Endothelial cell of umbilical vein (primary cell): ENCODE measurements at regions of chr2 and their contacts with region 1.

Region 1: GRCh38 chr2:98835831-98836385 is 100.1 kb downstream of the CRACDL start:
- DNase-seq: no peak
- H3K4me3 ChIP-seq: no peak overlapping the region
- H3K27ac ChIP-seq: no peak overlapping the region
- H3K4me1 ChIP-seq: peaks cover 23% of the 10 kb centered on the region
- H3K27me3 ChIP-seq: no peaks in the 10 kb centered on the region
- CTCF ChIP-seq: no peak
- POLR2A ChIP-seq: no peak

Region 2: DNA sequence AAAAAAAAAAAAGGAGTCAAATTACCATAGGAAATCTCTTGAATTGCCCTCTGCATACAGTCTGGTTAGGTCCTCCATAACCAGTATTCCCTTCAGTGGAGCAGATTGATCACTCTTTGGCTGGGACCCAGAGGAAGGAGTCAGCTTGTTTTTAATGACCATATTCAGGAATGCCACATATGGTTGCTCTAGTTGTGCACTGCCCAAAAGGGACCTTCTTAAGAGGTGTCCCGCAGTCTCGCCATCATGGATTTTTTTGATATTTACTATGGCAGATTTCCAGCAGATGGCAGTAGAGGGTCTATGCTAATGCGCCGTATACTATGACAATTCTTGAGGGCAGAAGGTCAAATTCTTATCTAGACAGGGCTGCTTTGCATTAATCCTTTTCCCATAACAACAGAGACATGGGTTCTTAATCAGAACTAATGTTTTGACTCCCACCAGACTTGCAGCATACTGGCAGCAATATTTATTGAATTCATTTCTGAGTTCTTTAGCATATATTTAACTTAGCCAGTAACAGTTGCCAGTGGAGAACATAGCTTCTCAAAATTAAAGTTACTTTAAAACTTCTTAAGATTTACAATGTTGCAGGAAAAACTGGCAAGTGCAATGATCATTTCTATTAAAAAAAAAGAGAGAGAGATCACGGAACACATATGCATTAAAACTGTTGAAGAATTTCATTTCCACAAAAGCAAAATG is 423.0 kb before region 1 on chr2:
- CTCF ChIA-PET with region 1: interaction called, 4 read pairs
- POLR2A ChIA-PET with region 1: no interaction called
- dilution Hi-C with region 1: no loop called
- intact Hi-C with region 1: loop called (anchors 1 kb)
- DNase-seq: peak; percentile 87
- H3K4me3 ChIP-seq: no peak overlapping the region
- H3K27ac ChIP-seq: no peak overlapping the region
- H3K4me1 ChIP-seq: peaks cover 3% of the 10 kb centered on the region
- H3K27me3 ChIP-seq: no peaks in the 10 kb centered on the region
- CTCF ChIP-seq: peak; percentile 58 to 61
- POLR2A ChIP-seq: no peak

Region 3: GRCh38 chr2:98649135-98649991 is 186.5 kb before region 1 on chr2:
- CTCF ChIA-PET with region 1: interaction called, 136 read pairs
- POLR2A ChIA-PET with region 1: no interaction called
- dilution Hi-C with region 1: no loop called
- intact Hi-C with region 1: loop called (anchors 1 kb)
- DNase-seq: peak; percentile 87
- H3K4me3 ChIP-seq: no peak overlapping the region
- H3K27ac ChIP-seq: peak overlapping the region; percentile 54
- H3K4me1 ChIP-seq: peaks cover 4% of the 10 kb centered on the region
- H3K27me3 ChIP-seq: no peaks in the 10 kb centered on the region
- CTCF ChIP-seq: peak; percentile 97
- POLR2A ChIP-seq: no peak

Region 4: GRCh38 chr2:98726205-98726604 is 109.7 kb before region 1 on chr2:
- CTCF ChIA-PET with region 1: interaction called, 21 read pairs
- POLR2A ChIA-PET with region 1: no interaction called
- dilution Hi-C with region 1: no loop called
- intact Hi-C with region 1: loop called (anchors 1 kb)
- DNase-seq: peak; percentile 77
- H3K4me3 ChIP-seq: peak overlapping the region; percentile 1 to 31 (median 4)
- H3K27ac ChIP-seq: peak overlapping the region; percentile 68
- H3K4me1 ChIP-seq: peaks cover 44% of the 10 kb centered on the region
- H3K27me3 ChIP-seq: no peaks in the 10 kb centered on the region
- CTCF ChIP-seq: no peak
- POLR2A ChIP-seq: no peak

Region 5: DNA sequence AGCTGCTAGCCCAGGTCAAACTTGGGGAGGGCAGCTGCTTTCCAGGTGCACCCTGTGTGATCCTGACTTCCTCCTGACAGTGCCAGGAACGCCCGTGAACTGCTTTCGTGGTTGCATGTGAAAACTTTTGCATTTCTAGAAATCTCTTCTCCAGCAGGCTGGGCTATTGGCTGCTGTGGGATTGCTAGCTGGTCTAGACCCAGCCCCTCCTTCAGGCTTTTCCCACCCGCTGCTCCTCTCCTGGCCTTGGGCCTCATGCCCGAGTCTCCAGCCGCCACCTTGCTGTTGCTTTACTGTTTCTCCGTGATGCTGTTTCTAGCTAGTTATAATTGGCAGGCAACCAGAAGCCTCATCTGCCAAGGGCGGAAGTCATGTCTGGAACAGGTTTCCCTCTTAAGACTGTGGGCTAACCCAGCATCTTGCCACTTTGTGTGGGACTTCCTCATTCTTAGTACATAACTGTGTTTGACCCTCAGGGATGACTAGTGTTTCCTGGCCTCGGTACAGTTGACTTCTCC is 77.9 kb before region 1 on chr2:
- CTCF ChIA-PET with region 1: interaction called, 7 read pairs
- POLR2A ChIA-PET with region 1: no interaction called
- dilution Hi-C with region 1: no loop called
- intact Hi-C with region 1: loop called (anchors 1 kb)
- DNase-seq: peak; percentile 98
- H3K4me3 ChIP-seq: no peak overlapping the region
- H3K27ac ChIP-seq: peak overlapping the region; percentile 66
- H3K4me1 ChIP-seq: peaks cover 20% of the 10 kb centered on the region
- H3K27me3 ChIP-seq: no peaks in the 10 kb centered on the region
- CTCF ChIP-seq: peak in 1 of 2 donors; percentile 3
- POLR2A ChIP-seq: peak; percentile 62

Region 6: DNA sequence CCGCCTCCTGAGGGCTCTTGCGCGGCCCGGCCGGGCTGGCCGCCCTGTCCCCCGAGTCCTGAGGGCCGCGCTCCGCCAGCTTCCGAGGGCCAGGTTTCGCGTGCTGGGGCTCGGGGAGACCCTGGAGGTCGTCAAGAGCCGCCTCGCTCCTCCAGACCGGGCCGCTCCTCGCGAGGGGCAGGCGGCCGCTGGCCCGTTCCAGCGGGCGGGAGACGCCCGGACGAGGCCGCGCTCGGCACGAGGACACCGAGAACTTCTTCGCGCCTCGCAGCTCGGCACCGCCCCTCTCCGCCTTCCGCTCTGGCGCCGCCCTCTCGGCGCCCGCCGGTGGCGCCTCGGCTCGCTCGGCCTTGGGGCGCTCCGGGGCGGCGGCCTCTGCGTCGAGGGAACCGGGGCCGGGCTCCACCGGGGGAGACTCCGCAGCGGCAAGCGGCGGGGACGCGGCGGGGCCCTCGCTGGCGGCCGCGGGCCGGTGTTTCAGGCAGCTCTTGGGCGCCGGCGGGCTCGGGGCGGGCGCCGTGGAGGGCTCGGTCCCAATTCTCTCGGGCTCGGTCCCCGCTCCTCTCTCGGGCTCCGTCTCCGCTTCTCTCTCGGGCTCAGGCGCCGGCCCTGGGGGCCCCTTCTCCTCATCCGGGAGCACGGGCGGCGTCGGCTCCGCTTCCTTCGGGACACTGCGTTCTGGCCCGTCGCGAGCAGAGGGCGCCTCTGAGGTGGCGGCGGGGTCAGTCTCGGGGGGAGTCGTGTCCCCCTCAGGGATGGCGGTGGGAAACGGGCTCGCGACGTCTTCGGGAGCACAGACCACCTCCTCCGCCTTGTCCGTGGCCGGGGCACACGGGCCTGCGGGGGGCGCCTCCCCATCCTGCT is 13.4 kb before region 1 on chr2:
- CTCF ChIA-PET with region 1: interaction called, 4 read pairs
- POLR2A ChIA-PET with region 1: interaction called, 3 read pairs
- dilution Hi-C with region 1: no loop called
- intact Hi-C with region 1: loop called (anchors 1 kb)
- DNase-seq: peak; percentile 38
- H3K4me3 ChIP-seq: peak overlapping the region in 2 of 3 experiments; percentile 44
- H3K27ac ChIP-seq: peak overlapping the region; percentile 53
- H3K4me1 ChIP-seq: peaks cover 11% of the 10 kb centered on the region
- H3K27me3 ChIP-seq: no peaks in the 10 kb centered on the region
- CTCF ChIP-seq: peak; percentile 33 to 64
- POLR2A ChIP-seq: no peak

Region 7: GRCh38 chr2:98936353-98937351 is 100.7 kb after region 1 on chr2:
- CTCF ChIA-PET with region 1: interaction called, 16 read pairs
- POLR2A ChIA-PET with region 1: no interaction called
- dilution Hi-C with region 1: no loop called
- intact Hi-C with region 1: no loop called
- DNase-seq: peak; percentile 24
- H3K4me3 ChIP-seq: peak overlapping the region; percentile 24 to 46 (median 43)
- H3K27ac ChIP-seq: no peak overlapping the region
- H3K4me1 ChIP-seq: peaks cover 7% of the 10 kb centered on the region
- H3K27me3 ChIP-seq: peaks cover 30 to 39% of the 10 kb centered on the region in 2 experiments
- CTCF ChIP-seq: peak; percentile 15 to 49
- POLR2A ChIP-seq: no peak